Heart left ventricle (tissue), 16 donors: ENCODE measurements at regions of chr10 and their contacts with region 1.

Region 1: DNA sequence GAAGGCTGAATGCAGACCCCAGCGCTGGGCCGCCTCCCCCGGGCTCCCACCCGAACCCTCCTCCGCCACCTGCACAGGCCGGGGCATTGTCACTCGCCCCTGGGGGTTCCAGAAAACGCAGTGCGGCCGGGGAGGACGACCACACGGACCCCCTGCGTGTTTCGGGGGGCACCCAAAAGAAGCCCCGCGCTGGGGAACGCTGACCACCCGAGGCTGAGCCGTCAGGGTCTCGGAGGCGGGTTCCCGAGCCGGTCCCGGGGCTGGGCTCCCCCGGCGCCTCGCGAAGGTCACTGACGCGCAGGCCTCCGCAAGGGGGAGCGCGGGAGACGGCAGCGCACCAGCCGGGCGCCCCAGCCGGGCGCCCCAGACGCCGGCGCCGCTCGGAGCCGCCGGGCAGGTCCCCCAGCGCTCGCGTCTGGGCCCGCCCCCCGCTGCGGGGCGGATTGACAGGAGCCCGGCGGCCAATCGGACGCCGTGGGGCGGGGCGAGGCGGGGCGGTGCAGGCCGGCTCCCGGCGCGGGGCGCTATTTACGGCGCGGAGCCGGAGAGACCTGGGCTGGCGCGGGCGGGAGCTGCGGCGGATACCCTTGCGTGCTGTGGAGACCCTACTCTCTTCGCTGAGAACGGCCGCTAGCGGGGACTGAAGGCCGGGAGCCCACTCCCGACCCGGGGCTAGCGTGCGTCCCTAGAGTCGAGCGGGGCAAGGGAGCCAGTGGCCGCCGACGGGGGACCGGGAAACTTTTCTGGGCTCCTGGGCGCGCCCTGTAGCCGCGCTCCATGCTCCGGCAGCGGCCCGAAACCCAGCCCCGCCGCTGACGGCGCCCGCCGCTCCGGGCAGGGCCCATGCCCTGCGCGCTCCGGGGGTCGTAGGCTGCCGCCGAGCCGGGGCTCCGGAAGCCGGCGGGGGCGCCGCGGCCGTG is at the start of gene BAMBI:
- DNase-seq: peak; percentile 93 to 96 (median 93)
- ATAC-seq: peak; percentile 92 to 98 (median 97)
- H3K4me3 ChIP-seq: peak within 1 kb of the TSS; percentile 66 to 97 (median 84)
- H3K27ac ChIP-seq: peak within 1 kb of the TSS; percentile 61 to 90 (median 83)
- H3K4me1 ChIP-seq: peaks cover 0 to 44% (median 17%) of the 10 kb centered on the region in 12 donors
- H3K27me3 ChIP-seq: peaks cover 0 to 83% (median 5%) of the 10 kb centered on the region in 9 donors
- CTCF ChIP-seq: peak; percentile 28 to 80 (median 68)
- POLR2A ChIP-seq: peak; percentile 95 to 100
- total RNA-seq, gene BAMBI: 10.8 to 44.7 (median 24.8) TPM

Region 2: GRCh38 chr10:28807760-28808613 is 130.8 kb after region 1 on chr10:
- intact Hi-C with region 1: loop called in 4 of 10 experiments (anchors 5 to 10 kb)
- DNase-seq: no peak
- ATAC-seq: peak in 2 of 4 donors; percentile 48 to 56
- H3K4me3 ChIP-seq: peak overlapping the region in 4 of 12 donors; percentile 7 to 41 (median 23)
- H3K27ac ChIP-seq: peak overlapping the region; percentile 45 to 92 (median 75)
- H3K4me1 ChIP-seq: peaks cover 0 to 29% (median 18%) of the 10 kb centered on the region in 12 donors
- H3K27me3 ChIP-seq: no peaks in the 10 kb centered on the region
- CTCF ChIP-seq: no peak
- POLR2A ChIP-seq: no peak

Region 3: DNA sequence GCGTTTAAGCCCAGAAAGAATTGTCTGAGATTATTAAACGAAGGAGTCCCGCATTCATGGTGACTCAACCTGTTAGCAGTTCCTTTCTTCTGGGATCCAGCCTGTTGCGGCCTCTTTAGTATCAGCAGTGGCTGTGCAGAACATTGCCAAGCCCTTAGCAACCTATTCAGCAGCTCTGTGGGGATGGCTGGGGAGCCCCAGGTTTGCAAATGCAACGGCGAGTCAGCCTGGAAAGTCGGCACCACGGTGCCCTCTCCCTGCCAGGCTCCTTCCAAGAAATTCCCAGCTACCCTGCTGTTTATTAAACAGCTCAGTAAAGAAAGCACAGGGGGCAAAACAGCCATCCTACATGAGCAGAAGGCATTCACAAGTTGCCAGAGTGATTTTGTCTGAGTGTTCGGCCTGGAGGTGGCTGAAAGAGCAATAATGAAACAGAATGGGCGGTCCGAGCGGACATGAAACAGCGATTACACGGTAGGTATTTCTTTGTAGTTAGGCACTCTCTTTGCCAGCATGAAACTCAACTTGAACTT is 198.4 kb after region 1 on chr10:
- intact Hi-C with region 1: loop called in 5 of 10 experiments (anchors 5 to 10 kb)
- DNase-seq: no peak
- ATAC-seq: peak in 2 of 4 donors; percentile 26 to 53
- H3K4me3 ChIP-seq: no peak overlapping the region
- H3K27ac ChIP-seq: no peak overlapping the region
- H3K4me1 ChIP-seq: peaks cover 0 to 20% (median 11%) of the 10 kb centered on the region in 12 donors
- H3K27me3 ChIP-seq: peaks cover 0 to 2% (median 0%) of the 10 kb centered on the region in 9 donors
- CTCF ChIP-seq: peak in 1 of 12 donors; percentile 10
- POLR2A ChIP-seq: no peak

Region 4: GRCh38 chr10:28984431-28984830 is 307.2 kb after region 1 on chr10:
- intact Hi-C with region 1: loop called in 3 of 10 experiments (anchors 2 kb)
- DNase-seq: peak; percentile 75 to 94 (median 90)
- ATAC-seq: peak; percentile 95 to 98 (median 98)
- H3K4me3 ChIP-seq: no peak overlapping the region
- H3K27ac ChIP-seq: peak overlapping the region in 3 of 12 donors; percentile 32 to 56 (median 36)
- H3K4me1 ChIP-seq: peaks cover 0 to 21% (median 14%) of the 10 kb centered on the region in 12 donors
- H3K27me3 ChIP-seq: no peaks in the 10 kb centered on the region
- CTCF ChIP-seq: no peak
- POLR2A ChIP-seq: no peak

Region 5: DNA sequence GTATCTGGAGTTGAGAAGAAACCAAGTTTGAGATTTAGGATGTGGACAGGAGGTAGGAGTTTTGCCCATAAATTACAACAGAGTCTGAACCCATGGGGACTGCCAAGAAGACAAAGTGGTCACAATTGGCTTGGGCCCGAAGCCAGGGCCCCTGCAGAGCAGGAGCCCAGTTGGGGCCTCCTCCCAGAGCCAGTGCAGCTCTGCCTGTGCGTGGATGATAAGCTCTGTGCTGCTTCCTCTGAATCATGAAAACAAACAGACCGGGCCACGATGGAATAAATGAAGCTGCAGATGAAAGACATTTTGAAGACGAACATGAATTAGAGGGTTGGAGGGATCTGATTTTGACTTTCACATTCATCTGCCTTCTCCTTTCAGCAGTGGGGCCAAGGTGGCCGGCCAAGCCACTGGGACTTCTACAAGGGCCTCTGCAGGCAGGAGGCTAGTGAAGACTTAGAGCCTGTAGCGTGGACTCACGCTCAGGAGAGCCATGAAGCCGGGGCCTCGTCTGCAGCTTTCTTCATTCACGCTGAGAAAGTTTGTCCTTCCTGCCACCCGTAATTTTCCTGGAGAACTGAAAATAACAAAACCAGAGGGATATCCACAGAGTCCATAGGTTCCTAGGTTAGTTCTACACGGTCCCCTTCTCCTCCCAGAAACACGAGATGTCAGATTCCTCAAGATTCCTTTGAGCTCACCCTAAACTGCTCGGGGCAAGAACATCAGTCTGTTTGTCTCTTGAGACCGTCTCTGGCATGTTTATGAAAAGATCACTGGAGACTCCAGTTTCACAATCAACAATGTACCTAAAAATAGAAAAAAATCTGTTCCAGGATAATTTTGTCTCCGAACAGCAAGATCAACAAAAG is 455.0 kb after region 1 on chr10:
- intact Hi-C with region 1: loop called in 5 of 10 experiments (anchors 5 kb)
- DNase-seq: peak in 4 of 5 donors; percentile 16 to 64 (median 38)
- ATAC-seq: peak; percentile 23 to 86 (median 74)
- H3K4me3 ChIP-seq: no peak overlapping the region
- H3K27ac ChIP-seq: peak overlapping the region in 6 of 12 donors; percentile 8 to 31 (median 18)
- H3K4me1 ChIP-seq: peaks cover 0 to 17% (median 4%) of the 10 kb centered on the region in 12 donors
- H3K27me3 ChIP-seq: peaks cover 0 to under 1% (median 0%) of the 10 kb centered on the region in 9 donors
- CTCF ChIP-seq: no peak
- POLR2A ChIP-seq: no peak

Region 6: DNA sequence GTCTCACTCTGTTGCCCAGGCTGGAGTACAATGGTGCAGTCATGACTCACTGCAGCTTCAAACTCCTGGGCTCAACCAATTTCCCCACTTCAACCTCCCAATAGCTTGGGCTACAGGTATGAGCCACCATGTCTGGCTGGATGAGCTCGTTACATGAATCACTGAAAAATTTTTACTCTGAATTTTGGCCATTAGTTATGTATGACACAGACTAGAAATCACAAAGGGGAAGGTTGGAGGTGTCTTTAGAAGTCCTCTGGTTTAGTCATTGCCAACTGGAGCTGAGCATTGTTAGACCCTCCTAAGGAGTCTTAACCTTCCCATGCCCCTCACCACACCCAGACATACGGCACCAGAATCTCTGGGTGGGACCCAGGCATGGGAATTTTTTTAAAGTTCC is 922.8 kb after region 1 on chr10:
- intact Hi-C with region 1: no loop called
- DNase-seq: no peak
- ATAC-seq: no peak
- H3K4me3 ChIP-seq: no peak overlapping the region
- H3K27ac ChIP-seq: peak overlapping the region; percentile 17 to 95 (median 80)
- H3K4me1 ChIP-seq: peaks cover 0 to 83% (median 37%) of the 10 kb centered on the region in 12 donors
- H3K27me3 ChIP-seq: no peaks in the 10 kb centered on the region
- CTCF ChIP-seq: no peak
- POLR2A ChIP-seq: no peak

Region 7: GRCh38 chr10:30018496-30018895 is 1341.3 kb after region 1 on chr10:
- intact Hi-C with region 1: no loop called
- DNase-seq: no peak
- ATAC-seq: no peak
- H3K4me3 ChIP-seq: no peak overlapping the region
- H3K27ac ChIP-seq: no peak overlapping the region
- H3K4me1 ChIP-seq: peaks cover 0 to 29% (median 16%) of the 10 kb centered on the region in 12 donors
- H3K27me3 ChIP-seq: peaks cover 0 to 8% (median 0%) of the 10 kb centered on the region in 9 donors
- CTCF ChIP-seq: peak in 1 of 12 donors; percentile 11
- POLR2A ChIP-seq: no peak